A549 (cell line): ENCODE measurements at regions of chr20 and their contacts with region 1.

Region 1: DNA sequence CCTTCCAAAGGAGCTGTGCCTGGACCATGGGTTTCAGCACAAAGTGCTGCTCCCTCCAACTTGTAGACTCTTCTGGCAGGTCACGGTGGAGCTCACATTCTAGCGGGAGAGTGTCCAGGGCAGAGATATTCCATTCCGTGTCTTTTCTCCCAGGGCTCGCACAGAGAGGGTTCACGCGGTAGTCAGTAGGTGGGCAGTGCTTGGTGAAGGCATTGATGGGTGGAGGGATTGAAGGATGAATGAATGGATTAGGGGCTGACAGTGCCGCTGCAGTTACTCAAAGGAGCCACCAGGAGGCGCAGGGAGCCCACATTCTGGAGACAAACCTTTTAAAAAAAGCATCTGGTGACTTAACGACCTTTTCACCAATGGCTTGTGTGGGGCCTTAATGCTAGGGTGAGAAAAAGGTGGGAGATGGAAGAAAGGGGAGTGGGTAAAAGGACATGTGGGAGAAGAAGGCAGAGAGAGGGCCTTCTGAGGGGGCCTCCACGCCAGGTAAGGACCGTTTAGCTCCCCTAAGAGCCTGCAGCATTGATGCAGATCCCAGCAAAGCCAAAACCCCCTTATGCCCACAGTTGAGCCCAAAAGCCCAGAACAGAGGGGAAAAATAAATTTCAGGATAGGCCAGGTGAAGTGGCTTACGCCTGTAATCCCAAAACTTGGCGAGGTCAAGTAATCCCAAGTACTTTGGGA is 17.5 kb upstream of the FAM110A start:
- DNase-seq: peak; percentile 76 to 84
- ATAC-seq: peak; percentile 48 to 76; a peak in 4 of 6 replicates
- H3K4me3 ChIP-seq: no peak overlapping the region
- H3K27ac ChIP-seq: no peak overlapping the region
- H3K4me1 ChIP-seq: no peaks in the 10 kb centered on the region
- CTCF ChIP-seq: peak; percentile 98
- EP300 ChIP-seq: no peak
- POLR2A ChIP-seq: no peak
- RAD21 ChIP-seq: peak; percentile 97 to 98

Region 2: DNA sequence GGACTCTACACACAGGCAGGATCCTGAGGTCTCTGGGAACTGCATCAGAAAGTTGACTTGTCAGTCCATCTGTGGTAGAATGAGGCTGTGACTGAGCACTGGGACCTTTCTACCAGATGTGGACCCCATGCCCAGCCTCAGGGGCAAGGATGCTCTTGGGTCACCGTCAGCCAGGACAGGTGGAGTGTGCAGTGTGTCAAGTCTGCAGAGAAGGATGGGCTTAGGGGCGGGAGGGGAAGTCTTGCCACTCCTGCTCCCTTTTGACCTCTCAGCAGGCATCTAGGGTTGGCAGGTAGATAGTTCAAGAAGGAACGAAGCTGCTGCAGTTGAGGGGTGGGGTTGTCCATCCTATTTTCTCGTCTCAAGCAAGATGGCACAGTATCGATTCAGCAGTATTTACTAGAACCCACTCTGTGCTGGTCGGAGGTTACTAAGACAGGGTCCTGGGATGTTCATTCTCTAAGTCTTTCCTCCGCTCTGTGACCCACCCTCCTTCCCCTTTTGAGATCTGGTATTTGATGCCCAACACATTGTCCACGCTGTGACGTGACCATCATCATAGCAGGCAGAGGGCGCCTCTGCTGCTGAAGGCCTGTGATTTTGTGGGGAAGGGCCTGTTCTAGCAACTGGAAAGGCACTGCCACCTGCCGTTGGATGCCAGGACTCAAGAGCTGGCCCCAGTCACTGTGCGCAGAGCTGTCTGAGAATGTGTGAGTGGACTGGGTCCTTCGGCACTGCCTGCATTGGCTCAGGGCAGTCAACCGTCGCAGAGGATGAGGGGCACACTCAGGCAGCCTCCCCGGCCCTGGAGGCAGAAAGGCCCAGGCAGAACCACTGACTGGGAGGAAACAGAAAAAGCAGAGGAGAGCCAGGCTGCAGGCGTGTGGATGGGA is 384.8 kb before region 1 on chr20:
- CTCF ChIA-PET with region 1: no interaction called
- POLR2A ChIA-PET with region 1: no interaction called
- DNase-seq: peak; percentile 94 to 95
- ATAC-seq: peak; percentile 70 to 93
- H3K4me3 ChIP-seq: no peak overlapping the region
- H3K27ac ChIP-seq: peak overlapping the region; percentile 27 to 73; a peak in 5 of 6 replicates
- H3K4me1 ChIP-seq: peaks cover 16% of the 10 kb centered on the region
- CTCF ChIP-seq: peak; percentile 99
- EP300 ChIP-seq: no peak
- POLR2A ChIP-seq: no peak
- RAD21 ChIP-seq: peak; percentile 95 to 98

Region 3: GRCh38 chr20:740141-740540 is 75.9 kb before region 1 on chr20:
- CTCF ChIA-PET with region 1: no interaction called
- POLR2A ChIA-PET with region 1: no interaction called
- DNase-seq: no peak
- ATAC-seq: no peak
- H3K4me3 ChIP-seq: no peak overlapping the region
- H3K27ac ChIP-seq: no peak overlapping the region
- H3K4me1 ChIP-seq: no peaks in the 10 kb centered on the region
- CTCF ChIP-seq: no peak
- EP300 ChIP-seq: no peak
- POLR2A ChIP-seq: no peak
- RAD21 ChIP-seq: no peak

Region 4: DNA sequence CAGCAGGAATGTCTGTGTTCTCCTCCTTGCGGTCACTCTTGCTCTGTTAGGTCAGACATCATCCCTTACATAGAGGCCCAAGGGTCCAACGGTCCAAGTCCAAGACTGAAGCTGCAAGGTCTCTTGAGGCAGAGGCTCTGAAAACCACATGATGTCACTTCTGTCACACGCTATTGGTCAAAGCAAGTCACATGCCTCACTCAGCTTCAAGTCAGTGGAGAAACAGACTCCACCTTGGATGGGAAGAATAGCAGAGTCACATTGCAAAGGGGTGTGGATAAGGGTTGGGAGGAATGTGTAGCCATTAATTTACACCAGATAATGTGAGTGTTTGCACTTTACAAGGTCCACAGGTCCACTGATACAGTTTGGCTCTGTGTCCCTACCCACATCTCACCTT is 65.3 kb before region 1 on chr20:
- CTCF ChIA-PET with region 1: no interaction called
- POLR2A ChIA-PET with region 1: no interaction called
- DNase-seq: peak in 1 of 2 experiments; percentile 49
- ATAC-seq: peak; percentile 42 to 50; a peak in 4 of 6 replicates
- H3K4me3 ChIP-seq: no peak overlapping the region
- H3K27ac ChIP-seq: no peak overlapping the region
- H3K4me1 ChIP-seq: no peaks in the 10 kb centered on the region
- CTCF ChIP-seq: no peak
- EP300 ChIP-seq: no peak
- POLR2A ChIP-seq: no peak
- RAD21 ChIP-seq: no peak

Region 5: GRCh38 chr20:796921-797320 is 19.1 kb before region 1 on chr20:
- CTCF ChIA-PET with region 1: interaction called, 20 read pairs
- POLR2A ChIA-PET with region 1: no interaction called
- DNase-seq: no peak
- ATAC-seq: no peak
- H3K4me3 ChIP-seq: no peak overlapping the region
- H3K27ac ChIP-seq: no peak overlapping the region
- H3K4me1 ChIP-seq: no peaks in the 10 kb centered on the region
- CTCF ChIP-seq: no peak
- EP300 ChIP-seq: no peak
- POLR2A ChIP-seq: no peak
- RAD21 ChIP-seq: no peak

Region 6: DNA sequence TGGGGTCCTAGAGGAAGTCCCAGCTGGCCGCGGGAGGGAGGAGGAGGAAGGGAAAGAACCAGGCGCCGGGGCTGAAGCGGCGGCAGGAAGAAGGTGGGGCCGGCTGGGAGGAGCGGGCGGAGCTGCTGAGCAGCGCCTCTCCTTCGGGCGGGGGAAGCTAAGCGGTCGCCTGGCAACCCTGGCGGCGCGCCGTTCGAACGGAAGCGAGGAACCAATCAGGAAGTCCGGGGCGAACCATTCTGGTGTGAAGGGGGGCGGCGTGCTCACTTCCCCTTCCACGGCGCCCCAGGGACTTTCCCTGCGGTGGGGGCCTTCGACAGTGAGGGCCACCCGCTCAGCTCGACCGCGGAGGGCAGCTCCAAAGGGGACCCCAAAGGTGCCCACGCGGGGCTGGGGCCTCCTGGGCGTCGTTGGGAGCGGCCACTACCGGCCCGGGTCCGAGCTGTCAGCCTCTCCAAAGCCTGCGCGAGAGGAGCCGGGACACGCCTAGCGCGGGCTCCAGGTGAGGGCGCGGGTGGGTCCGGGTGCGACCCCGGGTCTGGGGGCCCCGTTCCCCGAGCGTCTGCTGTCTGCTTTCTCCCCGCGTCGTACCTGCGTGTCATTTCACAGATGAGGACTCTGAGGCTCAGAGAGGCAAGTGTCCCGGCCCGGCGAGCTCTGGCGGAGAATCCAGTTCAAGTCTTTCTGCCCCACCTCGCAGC is 17.5 kb after region 1 on chr20 and contains the start of gene FAM110A:
- CTCF ChIA-PET with region 1: interaction called, 30 read pairs
- POLR2A ChIA-PET with region 1: no interaction called
- DNase-seq: peak; percentile 94 to 96
- ATAC-seq: peak; percentile 97 to 98
- H3K4me3 ChIP-seq: peak within 1 kb of the TSS; percentile 75
- H3K27ac ChIP-seq: peak within 1 kb of the TSS; percentile 86 to 92
- H3K4me1 ChIP-seq: peaks cover 6% of the 10 kb centered on the region; the same call in 2 of the 3 replicates
- CTCF ChIP-seq: no peak
- EP300 ChIP-seq: no peak
- POLR2A ChIP-seq: peak; percentile 27; the same call in 1 of the 2 replicates
- RAD21 ChIP-seq: no peak
- polyA plus RNA-seq, gene FAM110A: 3.1 TPM in 2 replicates

Region 7: DNA sequence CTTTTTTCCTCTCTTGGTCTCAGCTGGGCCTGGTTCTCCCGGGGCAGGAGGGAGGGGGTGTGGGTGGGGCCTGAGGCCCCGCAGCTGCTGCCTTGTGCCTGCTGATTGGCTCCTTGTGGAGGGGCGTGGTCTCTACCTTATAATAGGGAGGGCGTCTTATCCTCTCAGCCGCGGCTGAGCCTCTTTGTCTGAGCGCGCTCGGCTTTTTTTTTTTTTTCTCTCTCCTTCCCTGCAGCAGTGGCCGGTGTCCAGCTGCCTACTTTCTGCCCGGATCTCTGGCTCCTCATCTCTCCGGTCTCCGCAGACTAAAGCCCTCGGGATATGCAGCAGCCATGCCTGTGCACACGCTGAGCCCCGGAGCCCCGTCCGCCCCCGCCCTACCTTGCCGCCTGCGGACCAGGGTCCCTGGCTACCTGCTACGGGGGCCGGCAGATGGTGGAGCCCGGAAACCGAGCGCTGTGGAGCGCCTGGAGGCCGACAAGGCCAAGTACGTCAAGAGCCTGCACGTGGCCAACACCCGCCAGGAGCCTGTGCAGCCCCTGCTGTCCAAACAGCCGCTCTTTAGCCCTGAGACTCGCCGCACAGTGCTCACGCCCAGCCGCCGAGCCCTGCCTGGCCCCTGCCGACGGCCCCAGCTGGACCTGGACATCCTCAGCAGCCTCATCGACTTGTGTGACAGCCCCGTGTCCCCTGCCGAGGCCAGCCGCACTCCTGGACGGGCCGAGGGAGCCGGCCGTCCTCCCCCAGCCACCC is 28.6 kb after region 1 on chr20:
- CTCF ChIA-PET with region 1: interaction called, 10 read pairs
- POLR2A ChIA-PET with region 1: no interaction called
- DNase-seq: peak; percentile 70 to 73
- ATAC-seq: peak; percentile 50 to 93; a peak in 4 of 6 replicates
- H3K4me3 ChIP-seq: no peak overlapping the region
- H3K27ac ChIP-seq: no peak overlapping the region
- H3K4me1 ChIP-seq: peaks cover 5% of the 10 kb centered on the region; the same call in 1 of the 3 replicates
- CTCF ChIP-seq: no peak
- EP300 ChIP-seq: no peak
- POLR2A ChIP-seq: no peak
- RAD21 ChIP-seq: no peak

Region 8: GRCh38 chr20:872855-873521 is 56.9 kb after region 1 on chr20:
- CTCF ChIA-PET with region 1: interaction called, 19 read pairs
- POLR2A ChIA-PET with region 1: no interaction called
- DNase-seq: no peak
- ATAC-seq: peak in 1 of 2 experiments; percentile 12; a peak in 2 of 6 replicates
- H3K4me3 ChIP-seq: no peak overlapping the region
- H3K27ac ChIP-seq: no peak overlapping the region
- H3K4me1 ChIP-seq: no peaks in the 10 kb centered on the region
- CTCF ChIP-seq: no peak; the same call in 2 of the 3 replicates
- EP300 ChIP-seq: no peak
- POLR2A ChIP-seq: no peak
- RAD21 ChIP-seq: no peak

Region 9: DNA sequence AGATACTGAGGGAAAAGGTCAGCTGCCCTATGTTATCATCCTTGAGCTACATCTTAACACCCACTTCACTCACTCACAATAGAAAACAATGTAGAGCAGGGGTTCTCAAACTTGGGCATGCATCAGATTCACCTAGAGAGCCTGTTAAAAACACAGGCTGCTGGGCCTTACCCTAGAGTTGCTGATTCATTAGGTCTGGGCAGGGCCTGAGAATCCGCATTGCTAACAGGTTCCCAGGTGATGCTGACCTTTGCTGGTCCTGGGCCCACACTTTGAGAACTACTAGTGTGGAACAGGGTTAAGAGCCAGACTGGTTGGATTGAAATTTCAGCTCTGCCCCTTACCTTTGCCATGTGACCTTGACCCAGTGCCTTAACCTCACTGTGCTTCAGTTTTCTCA is 161.0 kb after region 1 on chr20:
- CTCF ChIA-PET with region 1: interaction called, 872 read pairs
- POLR2A ChIA-PET with region 1: no interaction called
- DNase-seq: no peak
- ATAC-seq: no peak
- H3K4me3 ChIP-seq: no peak overlapping the region
- H3K27ac ChIP-seq: no peak overlapping the region
- H3K4me1 ChIP-seq: no peaks in the 10 kb centered on the region
- CTCF ChIP-seq: no peak
- EP300 ChIP-seq: no peak
- POLR2A ChIP-seq: no peak
- RAD21 ChIP-seq: no peak

Region 10: GRCh38 chr20:1185790-1186334 is 369.8 kb after region 1 on chr20:
- CTCF ChIA-PET with region 1: interaction called, 10 read pairs
- POLR2A ChIA-PET with region 1: no interaction called
- DNase-seq: peak; percentile 78 to 81
- ATAC-seq: peak; percentile 72 to 87
- H3K4me3 ChIP-seq: peak overlapping the region; percentile 94
- H3K27ac ChIP-seq: peak overlapping the region; percentile 76 to 90
- H3K4me1 ChIP-seq: peaks cover 16% of the 10 kb centered on the region
- CTCF ChIP-seq: peak; percentile 79
- EP300 ChIP-seq: no peak
- POLR2A ChIP-seq: no peak
- RAD21 ChIP-seq: peak; percentile 64 to 83